Right ventricle myocardium inferior (tissue), 1 donor: ENCODE measurements at regions of chr1 and their contacts with region 1.

Region 1: GRCh38 chr1:35857830-35858229 is 25.2 kb upstream of the AGO1 start:
- DNase-seq: no peak
- ATAC-seq: no peak

Region 2: GRCh38 chr1:35470977-35471613 is 386.7 kb before region 1 on chr1:
- intact Hi-C with region 1: no loop called
- DNase-seq: no peak
- ATAC-seq: no peak

Region 3: GRCh38 chr1:35747938-35748702 is 109.7 kb before region 1 on chr1:
- intact Hi-C with region 1: no loop called
- DNase-seq: no peak
- ATAC-seq: no peak

Region 4: DNA sequence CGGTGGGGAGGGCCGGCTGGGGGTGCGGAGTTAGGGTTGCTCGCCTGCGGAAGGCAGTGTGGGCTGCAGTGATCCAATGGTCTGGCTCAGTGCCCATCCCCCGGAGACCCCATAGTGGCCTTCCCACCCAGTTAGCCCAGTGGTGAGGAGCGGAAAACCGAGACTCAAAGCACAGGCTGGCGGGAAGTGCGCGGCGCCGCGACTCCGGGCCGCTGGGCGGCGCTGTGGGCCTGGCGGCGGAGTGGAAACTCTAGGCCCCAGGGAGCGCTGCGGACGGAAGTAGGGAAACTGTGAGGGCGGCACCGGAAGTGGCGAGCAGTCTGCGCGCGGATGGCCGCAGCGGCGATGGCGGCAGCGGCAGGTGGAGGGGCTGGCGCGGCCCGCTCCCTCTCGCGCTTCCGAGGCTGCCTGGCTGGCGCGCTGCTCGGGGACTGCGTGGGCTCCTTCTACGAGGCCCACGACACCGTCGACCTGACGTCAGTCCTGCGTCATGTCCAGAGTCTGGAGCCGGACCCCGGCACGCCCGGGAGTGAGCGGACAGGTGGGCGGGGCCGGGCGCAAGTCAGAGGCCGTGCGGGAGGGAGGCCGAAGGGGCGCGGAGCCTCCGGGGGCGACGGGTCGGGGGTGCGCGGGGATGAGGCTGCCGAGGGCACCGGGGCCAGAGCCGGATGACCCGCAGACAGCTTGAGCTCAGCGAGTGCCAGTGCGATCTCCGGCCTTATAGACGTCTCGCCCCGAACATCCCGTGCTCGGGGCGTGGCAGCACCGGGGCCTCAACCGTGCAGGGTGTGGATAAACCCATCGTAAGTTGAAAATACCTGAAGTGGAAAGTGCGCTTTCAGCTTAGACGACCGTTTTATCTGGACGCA is 231.0 kb after region 1 on chr1 and contains the start of gene ADPRS:
- intact Hi-C with region 1: loop called (anchors 10 kb)
- DNase-seq: peak; percentile 94
- ATAC-seq: peak; percentile 94
- total RNA-seq, gene ADPRS: 18.1 TPM